Right lobe of liver (tissue), 6 donors: ENCODE measurements at regions of chr15 and their contacts with region 1.

Region 1: GRCh38 chr15:83854321-83854720 is 200.4 kb downstream of the ADAMTSL3 start:
- DNase-seq: no peak
- ATAC-seq: peak in 1 of 4 donors; percentile 62
- H3K4me3 ChIP-seq: no peak overlapping the region
- H3K27ac ChIP-seq: no peak overlapping the region
- H3K4me1 ChIP-seq: peaks cover 0 to 33% (median 0%) of the 10 kb centered on the region in 4 donors
- H3K27me3 ChIP-seq: no peaks in the 10 kb centered on the region
- CTCF ChIP-seq: no peak
- POLR2A ChIP-seq: no peak

Region 2: DNA sequence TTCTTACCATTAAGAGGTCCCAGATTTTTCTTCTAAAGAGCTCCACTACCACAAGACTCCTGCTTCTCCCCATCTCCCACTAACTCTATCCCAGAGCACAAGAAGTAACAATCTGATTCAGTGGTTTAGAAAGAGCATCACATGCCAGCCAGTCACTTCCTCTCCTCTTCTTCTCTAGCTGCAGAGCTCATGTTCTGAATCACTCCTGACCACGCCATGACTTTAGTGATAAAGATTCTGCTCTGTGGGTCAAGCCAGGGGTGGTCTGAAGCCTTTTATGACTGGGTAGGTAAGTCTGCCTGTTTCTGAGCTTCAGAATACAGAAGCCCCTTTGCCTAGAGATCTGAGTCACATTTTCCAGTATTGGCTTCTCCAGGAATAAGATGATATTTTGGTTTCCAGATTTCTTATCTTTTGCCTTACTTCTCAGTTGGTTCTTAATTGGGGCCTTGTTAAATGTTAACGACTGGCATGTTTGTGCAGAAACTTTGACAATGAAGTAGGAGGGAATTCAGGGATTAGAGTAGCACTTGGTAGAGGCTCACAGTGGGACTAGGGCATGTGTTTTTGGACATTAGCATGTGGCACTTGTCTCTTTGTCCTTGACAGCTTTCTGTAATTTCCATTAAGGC is 228.0 kb before region 1 on chr15:
- intact Hi-C with region 1: no loop called
- DNase-seq: no peak
- ATAC-seq: no peak
- H3K4me3 ChIP-seq: no peak overlapping the region
- H3K27ac ChIP-seq: no peak overlapping the region
- H3K4me1 ChIP-seq: no peaks in the 10 kb centered on the region
- H3K27me3 ChIP-seq: no peaks in the 10 kb centered on the region
- CTCF ChIP-seq: no peak
- POLR2A ChIP-seq: no peak

Region 3: GRCh38 chr15:83928392-83928734 is 74.0 kb after region 1 on chr15:
- intact Hi-C with region 1: loop called in 1 of 2 experiments (anchors 10 kb)
- DNase-seq: no peak
- ATAC-seq: no peak
- H3K4me3 ChIP-seq: no peak overlapping the region
- H3K27ac ChIP-seq: peak overlapping the region in 2 of 3 donors; percentile 79 to 93
- H3K4me1 ChIP-seq: peaks cover 0 to 23% (median 10%) of the 10 kb centered on the region in 4 donors
- H3K27me3 ChIP-seq: no peaks in the 10 kb centered on the region
- CTCF ChIP-seq: no peak
- POLR2A ChIP-seq: no peak

Region 4: DNA sequence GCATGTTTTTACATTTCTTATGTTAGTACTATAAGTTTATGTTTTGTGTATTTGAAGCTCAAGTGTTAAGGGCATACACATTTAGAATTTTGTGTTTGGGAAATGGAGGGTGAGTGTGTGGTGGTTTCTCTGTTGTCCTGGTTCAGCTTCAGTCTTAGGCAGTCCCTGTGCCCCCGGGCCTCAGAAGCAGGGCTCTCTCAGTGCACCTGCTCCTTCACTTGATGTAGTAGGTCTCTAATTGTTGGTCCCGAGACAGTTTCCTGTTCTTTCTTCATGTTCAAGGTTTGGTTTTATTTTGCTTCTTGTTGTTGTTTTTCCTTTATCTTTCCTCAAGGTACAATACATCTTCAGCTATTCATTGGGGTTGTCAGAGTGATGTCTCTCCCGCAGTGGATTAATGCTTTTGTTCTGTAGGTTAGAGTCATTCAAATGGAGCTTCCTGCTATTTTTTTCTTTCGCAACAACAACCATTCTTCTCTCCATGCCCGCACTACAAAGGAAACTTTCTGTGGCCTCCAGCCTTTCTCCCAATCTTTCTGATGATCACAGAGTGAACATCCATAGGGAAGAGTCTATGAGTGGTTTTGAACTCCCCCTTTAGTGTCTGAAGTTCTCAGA is 203.5 kb after region 1 on chr15:
- intact Hi-C with region 1: no loop called
- DNase-seq: no peak
- ATAC-seq: no peak
- H3K4me3 ChIP-seq: no peak overlapping the region
- H3K27ac ChIP-seq: no peak overlapping the region
- H3K4me1 ChIP-seq: no peaks in the 10 kb centered on the region
- H3K27me3 ChIP-seq: no peaks in the 10 kb centered on the region
- CTCF ChIP-seq: no peak
- POLR2A ChIP-seq: no peak